MCF 10A (cell line): ENCODE measurements at regions of chr22 and their contacts with region 1.

Region 1: GRCh38 chr22:41091132-41092022 is 1.0 kb upstream of the EP300 start:
- DNase-seq: peak; percentile 99
- H3K4me3 Mint-ChIP-seq: peak overlapping the region; percentile 98
- H3K27ac Mint-ChIP-seq: peak overlapping the region; percentile 99
- H3K4me1 Mint-ChIP-seq: peaks cover 28% of the 10 kb centered on the region
- H3K27me3 Mint-ChIP-seq: no peaks in the 10 kb centered on the region
- CTCF ChIP-seq: no peak

Region 2: DNA sequence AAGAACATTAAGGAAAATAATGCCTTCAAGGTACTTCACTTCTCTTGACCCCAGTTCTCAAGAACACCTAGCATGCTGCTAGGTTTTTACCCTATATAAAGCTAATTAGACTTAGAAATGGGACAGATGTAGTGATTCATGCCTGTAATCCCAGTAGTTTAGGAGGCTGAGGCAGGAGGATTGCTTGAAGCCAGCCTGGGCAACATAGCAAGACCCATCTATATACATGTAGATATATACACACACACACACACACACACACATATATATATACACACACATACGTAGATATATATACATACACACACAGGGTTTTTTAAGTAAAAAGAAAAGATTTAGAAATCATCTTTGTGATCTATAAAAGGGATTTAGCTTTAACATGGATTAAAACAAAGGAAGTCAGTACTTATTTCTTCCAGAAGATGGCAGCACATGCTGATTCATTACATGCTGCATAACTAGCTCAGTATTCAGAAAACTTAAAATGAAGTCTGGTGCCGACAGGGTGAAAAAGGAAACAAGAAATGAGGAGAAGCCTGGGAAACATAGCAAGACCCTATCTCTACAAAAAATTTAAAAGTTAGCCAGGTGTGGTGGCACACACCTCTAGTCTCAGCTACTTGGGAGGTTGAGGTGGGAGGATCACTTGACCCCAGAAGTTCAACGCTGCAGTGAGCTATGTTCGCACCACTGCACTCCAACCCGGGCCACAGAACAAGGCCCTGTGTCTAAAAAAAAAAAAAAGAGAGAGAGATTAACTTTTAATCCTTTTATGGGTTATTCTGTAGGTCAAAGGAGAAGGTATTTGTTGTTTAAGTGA is 168.7 kb before region 1 on chr22:
- CTCF ChIA-PET with region 1: interaction called, 5 read pairs
- POLR2A ChIA-PET with region 1: interaction called, 30 read pairs
- intact Hi-C with region 1: loop called (anchors 1 kb)
- DNase-seq: peak; percentile 66
- H3K4me3 Mint-ChIP-seq: no peak overlapping the region
- H3K27ac Mint-ChIP-seq: no peak overlapping the region
- H3K4me1 Mint-ChIP-seq: peaks cover 5% of the 10 kb centered on the region
- H3K27me3 Mint-ChIP-seq: no peaks in the 10 kb centered on the region
- CTCF ChIP-seq: peak; percentile 64

Region 3: DNA sequence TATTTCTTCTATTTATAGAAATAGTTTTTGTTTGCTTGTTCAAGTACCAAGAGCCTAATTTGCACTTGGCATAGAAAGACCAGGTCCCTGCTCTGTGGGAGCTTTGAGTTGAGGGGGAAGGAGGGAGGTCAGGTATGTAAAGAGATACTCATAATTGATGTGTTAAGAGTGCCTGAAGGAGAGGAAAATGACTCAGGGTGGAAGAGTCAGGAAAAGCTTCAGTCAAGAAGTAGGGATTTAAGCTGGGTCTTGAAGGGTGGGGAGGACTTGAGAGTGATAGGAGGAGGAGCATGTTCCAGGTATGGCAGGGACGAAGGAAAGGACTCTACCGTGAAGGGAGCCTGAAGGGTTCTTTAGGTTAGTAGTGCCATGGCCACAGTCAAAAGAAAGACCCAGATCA is 131.2 kb before region 1 on chr22:
- CTCF ChIA-PET with region 1: interaction called, 4 read pairs
- POLR2A ChIA-PET with region 1: interaction called, 231 read pairs
- intact Hi-C with region 1: no loop called
- DNase-seq: no peak
- H3K4me3 Mint-ChIP-seq: no peak overlapping the region
- H3K27ac Mint-ChIP-seq: peak overlapping the region; percentile 10
- H3K4me1 Mint-ChIP-seq: no peaks in the 10 kb centered on the region
- H3K27me3 Mint-ChIP-seq: no peaks in the 10 kb centered on the region
- CTCF ChIP-seq: no peak

Region 4: GRCh38 chr22:41022470-41023298 is 68.7 kb before region 1 on chr22:
- CTCF ChIA-PET with region 1: no interaction called
- POLR2A ChIA-PET with region 1: interaction called, 170 read pairs
- intact Hi-C with region 1: loop called (anchors 2 kb)
- DNase-seq: peak; percentile 86
- H3K4me3 Mint-ChIP-seq: peak overlapping the region; percentile 88
- H3K27ac Mint-ChIP-seq: peak overlapping the region; percentile 97
- H3K4me1 Mint-ChIP-seq: peaks cover 6% of the 10 kb centered on the region
- H3K27me3 Mint-ChIP-seq: no peaks in the 10 kb centered on the region
- CTCF ChIP-seq: no peak

Region 5: DNA sequence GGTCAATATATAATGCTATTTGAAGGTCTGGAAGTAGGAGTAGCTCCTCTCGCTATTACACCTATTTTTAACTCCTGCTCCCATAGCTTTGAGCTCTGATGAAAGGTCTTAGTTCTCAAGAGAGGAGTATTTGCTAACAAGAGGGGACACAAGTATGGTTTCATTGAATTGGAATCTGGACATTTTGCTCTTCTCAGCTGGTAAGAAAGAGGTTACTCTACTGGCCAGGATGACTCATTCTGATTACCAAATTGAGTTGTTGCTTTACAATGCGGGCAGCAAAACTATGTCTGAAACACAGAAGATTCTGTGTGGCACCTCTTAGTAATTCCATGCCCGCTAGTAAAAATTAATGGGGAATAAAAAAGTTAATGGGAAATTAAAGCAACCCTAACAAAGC is 62.5 kb before region 1 on chr22:
- CTCF ChIA-PET with region 1: no interaction called
- POLR2A ChIA-PET with region 1: interaction called, 170 read pairs
- intact Hi-C with region 1: no loop called
- DNase-seq: peak; percentile 90
- H3K4me3 Mint-ChIP-seq: no peak overlapping the region
- H3K27ac Mint-ChIP-seq: peak overlapping the region; percentile 49
- H3K4me1 Mint-ChIP-seq: peaks cover 16% of the 10 kb centered on the region
- H3K27me3 Mint-ChIP-seq: no peaks in the 10 kb centered on the region
- CTCF ChIP-seq: no peak

Region 6: GRCh38 chr22:41171996-41172395 is 80.6 kb after region 1 on chr22:
- CTCF ChIA-PET with region 1: no interaction called
- POLR2A ChIA-PET with region 1: no interaction called
- intact Hi-C with region 1: no loop called
- DNase-seq: no peak
- H3K4me3 Mint-ChIP-seq: no peak overlapping the region
- H3K27ac Mint-ChIP-seq: peak overlapping the region; percentile 36
- H3K4me1 Mint-ChIP-seq: no peaks in the 10 kb centered on the region
- H3K27me3 Mint-ChIP-seq: no peaks in the 10 kb centered on the region
- CTCF ChIP-seq: no peak

Region 7: GRCh38 chr22:41197038-41197972 is 105.9 kb after region 1 on chr22:
- CTCF ChIA-PET with region 1: no interaction called
- POLR2A ChIA-PET with region 1: interaction called, 200 read pairs
- intact Hi-C with region 1: loop called (anchors 10 kb)
- DNase-seq: peak; percentile 74
- H3K4me3 Mint-ChIP-seq: peak overlapping the region; percentile 74
- H3K27ac Mint-ChIP-seq: peak overlapping the region; percentile 17
- H3K4me1 Mint-ChIP-seq: peaks cover 17% of the 10 kb centered on the region
- H3K27me3 Mint-ChIP-seq: no peaks in the 10 kb centered on the region
- CTCF ChIP-seq: no peak